Activated B cell treated with CpG ODN at 0.5 μM for 24 hours (primary cell): ENCODE measurements at regions of chr4 and their contacts with region 1.

Region 1: DNA sequence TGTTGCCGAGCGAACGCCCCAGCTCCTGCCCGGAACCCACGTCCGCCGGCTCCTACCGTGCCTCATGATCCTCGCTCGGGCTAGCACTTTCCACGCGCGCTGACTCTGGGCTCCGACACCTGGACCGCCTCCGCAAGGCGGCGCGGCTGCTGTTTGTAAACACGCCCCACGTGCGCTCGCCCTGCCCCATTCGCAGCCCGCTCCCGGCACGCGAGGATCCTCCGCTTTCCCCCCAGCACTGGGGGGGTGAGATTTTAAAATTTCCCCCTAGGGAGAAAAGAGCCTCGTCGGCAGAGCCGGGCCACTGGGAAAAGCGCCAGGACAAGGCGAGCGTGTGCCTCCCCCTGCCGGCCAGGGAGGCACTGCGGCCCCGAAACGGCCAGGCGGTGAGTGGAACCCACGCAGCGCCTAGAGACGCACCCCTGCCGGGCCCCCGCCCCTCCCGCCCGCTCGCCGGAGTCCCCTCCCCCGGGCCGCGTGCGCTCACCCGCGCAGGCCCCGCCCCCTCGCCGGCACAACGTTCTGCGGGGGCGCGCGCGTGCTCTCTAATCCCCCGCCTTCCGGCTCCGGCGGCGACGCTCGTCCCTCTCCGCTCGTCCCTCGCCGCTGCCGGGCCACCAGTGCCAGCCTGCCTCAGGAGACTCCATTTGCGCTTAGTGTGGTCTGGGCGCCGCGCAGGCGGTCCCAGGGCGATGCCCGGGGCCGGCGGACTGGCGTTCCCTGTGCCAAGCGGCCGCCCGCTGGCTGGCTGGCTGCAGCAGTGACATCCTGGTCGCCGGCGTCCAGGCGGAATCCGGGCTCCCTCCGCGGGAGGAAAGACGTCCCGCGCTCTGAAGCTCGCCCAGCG is at the start of gene TIGD2:
- DNase-seq: peak; percentile 82
- ATAC-seq: peak; percentile 95
- H3K4me3 Mint-ChIP-seq: peak within 1 kb of the TSS; percentile 88
- H3K27ac Mint-ChIP-seq: peak within 1 kb of the TSS; percentile 77
- H3K4me1 Mint-ChIP-seq: peaks cover 30% of the 10 kb centered on the region
- H3K27me3 Mint-ChIP-seq: no peaks in the 10 kb centered on the region
- CTCF ChIP-seq: peak; percentile 96
- total RNA-seq, gene TIGD2: 7.0 and 8.2 TPM in 2 replicates

Region 2: GRCh38 chr4:87220094-87220822 is 1891.0 kb before region 1 on chr4 and contains the start of gene KLHL8:
- CTCF ChIA-PET with region 1: no interaction called
- POLR2A ChIA-PET with region 1: no interaction called
- intact Hi-C with region 1: loop called (anchors 1 kb)
- DNase-seq: peak; percentile 93
- ATAC-seq: peak; percentile 92
- H3K4me3 Mint-ChIP-seq: peak within 1 kb of the TSS; percentile 95
- H3K27ac Mint-ChIP-seq: peak within 1 kb of the TSS; percentile 93
- H3K4me1 Mint-ChIP-seq: peaks cover 17% of the 10 kb centered on the region
- H3K27me3 Mint-ChIP-seq: no peaks in the 10 kb centered on the region
- CTCF ChIP-seq: no peak
- total RNA-seq, gene KLHL8: 10.5 and 12.6 TPM in 2 replicates

Region 3: DNA sequence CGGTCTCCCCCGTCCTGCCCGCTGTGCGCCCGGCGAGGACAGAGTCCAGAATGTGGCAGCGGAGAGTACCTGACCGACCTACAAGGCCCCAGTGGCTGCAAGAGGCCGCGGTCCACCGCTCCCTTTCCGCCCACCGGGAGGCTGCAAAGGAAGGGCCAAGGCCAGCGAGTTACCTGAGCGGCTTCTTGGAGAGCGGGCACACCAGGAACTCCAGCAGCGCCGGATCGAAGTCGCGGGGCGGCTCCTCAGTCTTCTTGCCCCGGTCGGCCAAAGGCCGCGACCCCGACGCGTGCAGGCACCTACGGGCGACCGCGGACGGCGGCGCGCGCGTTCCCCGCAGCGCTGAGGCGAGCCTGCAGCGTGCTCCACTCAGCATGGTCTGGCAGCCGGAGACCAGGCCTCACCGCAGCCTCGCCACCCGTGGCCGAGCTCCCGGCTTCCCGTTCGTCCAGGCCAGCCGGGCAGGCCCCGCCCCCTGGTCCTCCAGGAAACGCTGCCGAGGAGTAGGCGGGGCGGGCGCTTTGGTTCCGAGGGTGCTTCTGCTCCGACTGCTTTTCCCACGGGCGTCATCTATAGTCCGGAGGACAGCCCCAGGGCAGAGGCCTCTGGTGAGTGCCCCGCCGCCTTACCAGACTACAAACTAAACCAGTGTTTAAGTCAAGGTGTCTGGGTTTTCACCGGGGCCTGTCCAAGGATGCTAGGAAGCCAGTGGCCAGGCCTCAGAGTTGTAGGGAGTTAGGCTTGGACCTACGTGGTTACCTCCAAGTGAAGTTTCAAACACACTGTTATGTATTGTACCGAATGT is 587.7 kb before region 1 on chr4 and contains the start of gene PYURF:
- CTCF ChIA-PET with region 1: no interaction called
- POLR2A ChIA-PET with region 1: interaction called, 3 read pairs
- intact Hi-C with region 1: loop called (anchors 2 kb)
- DNase-seq: peak; percentile 72
- ATAC-seq: peak; percentile 84
- H3K4me3 Mint-ChIP-seq: peak within 1 kb of the TSS; percentile 95
- H3K27ac Mint-ChIP-seq: peak within 1 kb of the TSS; percentile 85
- H3K4me1 Mint-ChIP-seq: peaks cover 18% of the 10 kb centered on the region
- H3K27me3 Mint-ChIP-seq: no peaks in the 10 kb centered on the region
- CTCF ChIP-seq: no peak
- total RNA-seq, gene PYURF: 42.2 and 48.3 TPM in 2 replicates

Region 4: DNA sequence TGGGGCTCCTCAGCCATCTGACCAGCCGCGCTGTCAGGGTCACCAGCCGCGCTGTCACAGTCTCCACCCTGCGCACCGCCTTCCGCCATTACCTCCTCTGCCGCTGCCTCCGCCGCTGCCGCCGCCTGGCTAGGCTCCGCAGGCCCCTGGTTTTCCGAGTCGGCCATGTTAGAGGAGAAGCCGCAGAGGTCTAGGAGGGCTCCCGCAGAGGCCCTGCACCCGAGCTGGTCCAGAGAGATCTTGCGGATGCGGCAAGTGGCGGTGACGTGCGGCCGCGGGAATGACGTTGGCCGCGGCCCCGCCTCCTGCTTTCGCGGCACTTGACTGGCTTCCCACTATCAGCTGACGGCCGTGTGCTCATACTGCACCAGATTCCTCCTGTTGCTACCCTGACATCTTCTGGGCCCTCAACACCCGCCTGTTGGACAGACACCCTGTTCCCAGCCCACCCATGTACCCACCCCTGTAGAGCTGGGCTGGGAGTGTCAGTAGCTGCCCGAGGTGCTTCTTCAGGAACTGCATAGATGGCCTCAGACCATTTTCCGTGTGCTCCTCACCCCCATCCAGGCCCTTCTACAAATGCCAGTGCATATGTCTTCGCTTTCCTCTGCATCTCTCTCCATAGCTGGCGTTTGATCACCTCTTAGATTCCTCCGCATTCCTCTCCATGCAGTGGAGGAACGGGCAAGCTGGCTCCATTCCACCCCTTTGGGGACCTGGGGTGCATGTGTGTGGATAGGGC is 413.4 kb before region 1 on chr4 and contains the start of gene NAP1L5:
- CTCF ChIA-PET with region 1: no interaction called
- POLR2A ChIA-PET with region 1: no interaction called
- intact Hi-C with region 1: loop called (anchors 10 kb)
- DNase-seq: peak; percentile 55
- ATAC-seq: peak; percentile 84
- H3K4me3 Mint-ChIP-seq: peak within 1 kb of the TSS; percentile 89
- H3K27ac Mint-ChIP-seq: peak within 1 kb of the TSS; percentile 78
- H3K4me1 Mint-ChIP-seq: peaks cover 9% of the 10 kb centered on the region
- H3K27me3 Mint-ChIP-seq: no peaks in the 10 kb centered on the region
- CTCF ChIP-seq: no peak
- total RNA-seq, gene NAP1L5: 1.8 and 2.6 TPM in 2 replicates

Region 5: GRCh38 chr4:89044147-89044900 is 66.9 kb before region 1 on chr4:
- CTCF ChIA-PET with region 1: no interaction called
- POLR2A ChIA-PET with region 1: no interaction called
- intact Hi-C with region 1: loop called (anchors 2 kb)
- DNase-seq: no peak
- ATAC-seq: no peak
- H3K4me3 Mint-ChIP-seq: no peak overlapping the region
- H3K27ac Mint-ChIP-seq: no peak overlapping the region
- H3K4me1 Mint-ChIP-seq: peaks cover 10% of the 10 kb centered on the region
- H3K27me3 Mint-ChIP-seq: peaks cover 5% of the 10 kb centered on the region
- CTCF ChIP-seq: no peak

Region 6: GRCh38 chr4:89069481-89069880 is 41.7 kb before region 1 on chr4:
- CTCF ChIA-PET with region 1: no interaction called
- POLR2A ChIA-PET with region 1: no interaction called
- intact Hi-C with region 1: no loop called
- DNase-seq: no peak
- ATAC-seq: peak; percentile 25
- H3K4me3 Mint-ChIP-seq: no peak overlapping the region
- H3K27ac Mint-ChIP-seq: no peak overlapping the region
- H3K4me1 Mint-ChIP-seq: peaks cover 4% of the 10 kb centered on the region
- H3K27me3 Mint-ChIP-seq: no peaks in the 10 kb centered on the region
- CTCF ChIP-seq: no peak

Region 7: DNA sequence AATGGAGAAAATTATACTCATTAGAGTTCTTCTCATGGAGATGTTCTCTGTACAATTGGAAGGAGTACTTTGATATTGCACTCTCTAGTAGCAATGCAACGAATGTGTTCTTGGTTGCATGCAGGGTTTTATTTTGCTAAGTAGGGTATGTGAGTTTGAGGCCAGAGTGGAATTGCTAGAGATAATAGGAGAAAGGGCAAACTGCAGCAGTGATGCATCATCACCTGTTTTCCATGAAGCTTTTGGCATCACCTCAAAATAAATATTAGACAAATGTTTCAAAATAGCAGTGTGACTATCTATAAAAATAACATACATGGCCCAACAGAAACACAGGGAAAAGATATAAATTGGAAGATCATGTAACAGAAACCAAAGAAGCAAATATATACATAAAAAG is 93.4 kb after region 1 on chr4:
- CTCF ChIA-PET with region 1: no interaction called
- POLR2A ChIA-PET with region 1: no interaction called
- intact Hi-C with region 1: no loop called
- DNase-seq: no peak
- ATAC-seq: no peak
- H3K4me3 Mint-ChIP-seq: no peak overlapping the region
- H3K27ac Mint-ChIP-seq: no peak overlapping the region
- H3K4me1 Mint-ChIP-seq: no peaks in the 10 kb centered on the region
- H3K27me3 Mint-ChIP-seq: peaks cover 7% of the 10 kb centered on the region
- CTCF ChIP-seq: no peak

Region 8: GRCh38 chr4:90127223-90127705 is 1016.1 kb after region 1 on chr4 and contains the start of gene CCSER1:
- CTCF ChIA-PET with region 1: no interaction called
- POLR2A ChIA-PET with region 1: no interaction called
- intact Hi-C with region 1: loop called (anchors 2 kb)
- DNase-seq: peak; percentile 78
- ATAC-seq: peak; percentile 89
- H3K4me3 Mint-ChIP-seq: peak within 1 kb of the TSS; percentile 96
- H3K27ac Mint-ChIP-seq: peak within 1 kb of the TSS; percentile 95
- H3K4me1 Mint-ChIP-seq: peaks cover 21% of the 10 kb centered on the region
- H3K27me3 Mint-ChIP-seq: peaks cover 2% of the 10 kb centered on the region
- CTCF ChIP-seq: no peak
- total RNA-seq, gene CCSER1: 14.4 and 20.1 TPM in 2 replicates